ENCODE measurements at regions of chr3 and their contacts with region 1.

Region 1: DNA sequence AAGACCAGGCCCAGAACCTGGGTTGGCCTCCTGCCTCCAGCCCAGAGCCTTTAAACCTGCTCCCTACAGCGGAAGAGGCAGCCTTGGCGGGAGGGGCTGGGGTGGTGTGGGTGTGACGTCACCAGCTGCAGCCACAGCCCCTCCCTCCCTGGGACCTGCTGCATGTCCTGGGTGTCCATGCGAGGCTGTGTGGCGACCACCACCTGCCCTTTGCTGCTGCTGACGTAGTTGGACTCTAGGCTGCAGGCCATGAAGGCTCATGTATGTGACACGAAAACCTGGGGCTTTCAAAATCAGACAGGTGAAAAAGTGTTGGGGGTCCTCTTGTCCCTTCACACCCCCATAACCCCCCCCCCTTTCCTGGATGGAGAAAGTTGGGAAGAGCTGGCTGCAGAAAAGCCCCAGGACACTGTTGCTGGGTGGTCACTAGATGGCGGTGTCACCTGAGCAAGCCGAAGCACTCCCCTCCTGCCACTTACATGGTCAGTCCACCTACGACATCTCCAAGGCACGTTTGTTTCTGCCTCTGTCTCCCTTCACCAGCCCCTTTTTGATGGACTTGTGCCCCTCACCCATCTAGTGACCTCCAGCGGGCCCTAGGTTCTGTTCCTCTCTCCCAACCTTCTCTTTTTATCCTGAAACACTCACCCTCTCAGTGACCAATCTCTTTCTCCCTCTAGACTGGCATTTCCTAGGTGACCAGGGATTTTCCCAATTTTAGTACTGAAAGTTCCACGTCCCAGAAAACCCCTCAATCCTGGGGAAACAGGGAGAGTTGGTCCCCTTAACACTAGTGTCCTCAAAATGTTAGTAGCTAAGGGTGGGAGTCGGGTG is 35.2 kb downstream of the SLC6A20 start:
- DNase-seq: peak; percentile 71 to 87 (median 86)
- ATAC-seq: peak; percentile 94
- H3K4me3 ChIP-seq: no peak overlapping the region
- H3K27ac ChIP-seq: no peak overlapping the region
- H3K4me1 ChIP-seq: peaks cover 0 to 8% of the 10 kb centered on the region in 2 experiments; a peak in 3 of 5 replicates
- H3K27me3 ChIP-seq: peaks cover 30 to 77% of the 10 kb centered on the region in 2 experiments
- CTCF ChIP-seq: peak; percentile 93
- EP300 ChIP-seq: no peak
- POLR2A ChIP-seq: no peak
- RAD21 ChIP-seq: peak; percentile 81 to 93

Region 2: DNA sequence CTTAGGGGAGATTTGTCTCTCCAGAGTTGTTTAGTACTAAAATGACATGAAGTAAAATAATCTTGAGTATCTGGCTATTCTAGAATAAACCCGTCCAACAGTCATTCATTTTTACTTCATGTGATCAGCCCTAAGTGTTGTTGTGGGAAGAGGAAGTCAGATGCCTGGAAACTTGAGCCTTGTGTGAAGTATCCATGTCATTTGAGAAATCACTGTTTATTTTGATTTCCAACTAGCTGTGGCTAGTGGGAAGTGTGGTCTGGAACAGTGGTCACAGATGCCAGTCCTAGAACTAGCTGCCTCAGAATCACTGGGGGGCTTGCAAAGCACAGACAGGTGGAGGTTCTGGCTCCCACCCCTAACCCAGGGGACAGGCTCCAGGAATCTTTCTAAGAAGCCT is 244.3 kb before region 1 on chr3:
- CTCF ChIA-PET with region 1: no interaction called
- POLR2A ChIA-PET with region 1: no interaction called
- in situ Hi-C with region 1: no loop called
- intact Hi-C with region 1: loop called (anchors 10 kb)
- DNase-seq: no peak
- ATAC-seq: no peak
- H3K4me3 ChIP-seq: no peak overlapping the region
- H3K27ac ChIP-seq: no peak overlapping the region
- H3K4me1 ChIP-seq: no peaks in the 10 kb centered on the region
- H3K27me3 ChIP-seq: no peaks in the 10 kb centered on the region
- CTCF ChIP-seq: no peak
- EP300 ChIP-seq: no peak
- POLR2A ChIP-seq: no peak
- RAD21 ChIP-seq: no peak

Region 3: DNA sequence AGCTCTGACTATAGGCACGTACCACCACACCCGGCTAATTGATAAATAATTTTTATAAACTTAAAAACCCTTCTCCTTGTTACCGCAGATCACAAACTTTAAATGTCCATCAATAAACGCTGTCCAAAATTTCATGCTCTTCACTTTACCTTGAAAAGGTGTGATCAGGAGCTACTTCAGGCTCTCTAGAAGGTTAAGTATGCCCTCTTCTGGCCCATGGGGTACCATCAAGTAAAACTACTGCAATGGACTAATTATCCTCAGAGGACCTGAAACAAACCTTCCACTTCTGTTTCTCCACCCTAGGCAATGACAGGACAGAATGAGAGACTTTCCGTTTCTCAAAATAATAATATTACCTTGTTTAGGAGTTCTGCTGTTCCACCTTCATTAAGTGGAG is 71.6 kb after region 1 on chr3:
- CTCF ChIA-PET with region 1: interaction called, 7 read pairs
- POLR2A ChIA-PET with region 1: no interaction called
- in situ Hi-C with region 1: no loop called
- intact Hi-C with region 1: loop called (anchors 5 kb)
- DNase-seq: peak in 2 of 4 experiments; percentile 24 to 40
- ATAC-seq: peak; percentile 71
- H3K4me3 ChIP-seq: no peak overlapping the region
- H3K27ac ChIP-seq: no peak overlapping the region
- H3K4me1 ChIP-seq: no peaks in the 10 kb centered on the region
- H3K27me3 ChIP-seq: no peaks in the 10 kb centered on the region
- CTCF ChIP-seq: peak; percentile 43 to 54 (median 48); a peak in 4 of 6 replicates
- EP300 ChIP-seq: no peak
- POLR2A ChIP-seq: no peak
- RAD21 ChIP-seq: peak; percentile 46 to 64

Region 4: DNA sequence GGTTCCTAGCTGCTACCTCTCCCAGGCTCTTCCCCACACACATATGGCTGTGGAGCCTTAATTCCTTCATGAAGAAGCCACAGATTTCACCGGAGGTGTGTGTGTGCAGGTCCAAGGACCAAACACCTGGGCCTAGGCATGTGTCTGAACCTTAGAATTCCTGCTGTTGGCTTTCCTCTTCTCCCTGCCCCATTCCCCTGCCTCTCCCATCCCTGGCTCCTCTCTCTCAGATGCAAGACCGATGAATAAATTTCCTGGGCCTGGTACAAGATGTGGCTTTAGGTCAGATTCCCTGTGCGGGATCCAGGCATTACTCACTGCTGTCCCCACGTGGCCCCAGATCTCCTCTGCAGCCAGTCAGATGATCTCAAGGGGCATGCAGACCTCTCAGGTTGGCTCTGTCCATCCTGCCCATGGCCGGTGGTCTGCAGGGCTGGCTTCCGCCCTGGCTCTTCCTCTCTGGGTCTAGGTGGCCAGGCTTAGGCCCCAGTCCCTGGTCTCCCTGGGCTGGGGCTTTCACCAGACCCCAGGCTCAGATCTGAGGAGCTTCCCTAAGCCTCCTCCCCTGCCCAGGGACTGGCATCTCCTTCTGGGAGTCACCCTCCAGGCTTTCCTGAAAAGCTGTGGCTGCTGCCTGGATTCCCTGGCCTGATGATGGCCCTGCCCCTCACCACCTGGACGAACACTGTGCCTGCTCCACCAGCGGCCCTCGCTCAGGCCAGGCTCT is 145.7 kb after region 1 on chr3:
- CTCF ChIA-PET with region 1: interaction called, 4 read pairs
- POLR2A ChIA-PET with region 1: interaction called, 4 read pairs
- in situ Hi-C with region 1: no loop called
- intact Hi-C with region 1: loop called (anchors 1 kb)
- DNase-seq: peak; percentile 40 to 60 (median 51)
- ATAC-seq: peak; percentile 90
- H3K4me3 ChIP-seq: no peak overlapping the region
- H3K27ac ChIP-seq: no peak overlapping the region
- H3K4me1 ChIP-seq: peaks cover 0 to 3% of the 10 kb centered on the region in 2 experiments; a peak in 3 of 5 replicates
- H3K27me3 ChIP-seq: peaks cover 5 to 59% of the 10 kb centered on the region in 2 experiments
- CTCF ChIP-seq: peak; percentile 80 to 90 (median 86)
- EP300 ChIP-seq: no peak
- POLR2A ChIP-seq: no peak
- RAD21 ChIP-seq: peak; percentile 55 to 77

Region 5: DNA sequence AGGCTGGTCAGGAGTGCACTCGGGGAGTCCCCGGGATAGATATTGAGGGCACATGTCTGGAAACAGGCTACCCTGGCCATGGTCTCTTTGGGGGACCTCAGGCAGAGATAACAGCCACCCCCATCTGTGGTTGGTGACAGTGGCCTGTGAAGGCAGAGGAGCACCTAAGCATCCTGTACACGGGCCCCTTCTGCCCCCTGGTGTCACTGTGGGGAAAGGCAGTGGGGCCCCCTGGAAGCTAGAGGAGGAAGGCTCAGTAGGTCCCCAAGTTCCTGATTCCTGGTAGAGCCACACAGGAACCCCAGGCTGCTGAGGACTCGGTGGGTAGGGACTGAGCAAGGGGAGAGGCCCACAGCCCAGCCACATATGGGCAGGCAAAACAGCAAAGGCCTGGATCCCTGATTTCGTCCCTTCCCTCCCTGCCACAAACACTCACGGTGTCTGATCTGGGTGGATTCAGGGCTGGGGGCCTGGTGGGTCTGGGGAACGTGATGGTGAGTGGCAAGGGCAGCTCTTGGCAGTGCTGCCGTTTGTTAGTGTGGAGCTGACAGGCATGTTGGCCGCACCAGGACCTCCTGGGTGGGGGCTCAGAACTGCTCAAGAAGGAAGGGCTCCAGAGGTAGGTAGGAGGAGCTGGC is 168.1 kb after region 1 on chr3:
- CTCF ChIA-PET with region 1: interaction called, 7 read pairs
- POLR2A ChIA-PET with region 1: no interaction called
- in situ Hi-C with region 1: no loop called
- intact Hi-C with region 1: loop called (anchors 1 kb)
- DNase-seq: peak; percentile 70 to 85 (median 80)
- ATAC-seq: peak; percentile 99
- H3K4me3 ChIP-seq: no peak overlapping the region
- H3K27ac ChIP-seq: no peak overlapping the region
- H3K4me1 ChIP-seq: no peaks in the 10 kb centered on the region
- H3K27me3 ChIP-seq: no peaks in the 10 kb centered on the region
- CTCF ChIP-seq: peak; percentile 86 to 93 (median 91)
- EP300 ChIP-seq: no peak
- POLR2A ChIP-seq: no peak
- RAD21 ChIP-seq: peak; percentile 88 to 89

Region 6: GRCh38 chr3:46013316-46014094 is 252.4 kb after region 1 on chr3:
- CTCF ChIA-PET with region 1: no interaction called
- POLR2A ChIA-PET with region 1: no interaction called
- in situ Hi-C with region 1: no loop called
- intact Hi-C with region 1: no loop called
- DNase-seq: no peak
- ATAC-seq: peak; percentile 58
- H3K4me3 ChIP-seq: no peak overlapping the region
- H3K27ac ChIP-seq: no peak overlapping the region
- H3K4me1 ChIP-seq: peaks cover 0 to 14% of the 10 kb centered on the region in 2 experiments; a peak in 3 of 5 replicates
- H3K27me3 ChIP-seq: peaks cover 6 to 29% of the 10 kb centered on the region in 2 experiments; a peak in 4 of 5 replicates
- CTCF ChIP-seq: no peak
- EP300 ChIP-seq: peak; percentile 52; the same call in 1 of the 2 replicates
- POLR2A ChIP-seq: no peak
- RAD21 ChIP-seq: no peak